ENCODE measurements at regions of chr12 and their contacts with region 1.

Region 1: DNA sequence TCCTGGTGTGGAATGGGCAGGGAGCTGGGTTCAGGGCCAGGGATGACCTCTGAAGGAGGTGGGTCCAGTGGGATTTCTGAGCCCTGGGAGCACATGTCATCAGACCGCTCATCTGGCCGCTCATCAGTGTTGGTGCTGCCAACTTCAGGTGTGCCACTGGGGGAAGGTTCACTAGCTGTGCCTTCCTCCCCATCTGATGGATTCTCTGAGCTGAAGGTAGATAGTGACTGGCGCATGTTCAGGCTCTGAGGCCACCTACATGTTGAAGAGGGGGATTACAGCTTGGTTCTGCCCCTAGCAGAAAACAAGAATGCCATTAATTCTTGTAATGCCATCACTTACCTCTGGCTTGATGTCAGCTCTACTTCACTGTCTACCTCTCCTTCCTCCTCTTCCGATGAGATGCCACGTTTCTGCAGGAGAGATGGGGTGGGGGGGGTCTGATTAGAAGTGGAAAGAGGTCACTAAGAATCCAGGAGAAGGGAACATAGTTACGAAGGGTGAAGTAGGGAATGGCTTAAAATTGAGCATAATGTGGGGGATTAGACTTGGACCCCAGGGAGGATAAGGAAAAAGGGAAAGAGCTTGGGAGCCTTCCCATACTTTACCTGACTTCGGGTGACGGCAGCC is 17.2 kb downstream of the MAP3K12 start:
- DNase-seq: no peak
- H3K4me3 ChIP-seq: no peak overlapping the region
- H3K27ac ChIP-seq: no peak overlapping the region
- H3K4me1 ChIP-seq: peaks cover 0 to 5% (median 1%) of the 10 kb centered on the region in 4 experiments; a peak in 4 of 7 replicates
- H3K27me3 ChIP-seq: no peaks in the 10 kb centered on the region
- CTCF ChIP-seq: peak; percentile 26 to 73 (median 46)
- EP300 ChIP-seq: no peak
- POLR2A ChIP-seq: peak; percentile 14 to 22; a peak in 2 of 3 replicates
- RAD21 ChIP-seq: peak; percentile 39 to 40; a peak in 3 of 4 replicates

Region 2: DNA sequence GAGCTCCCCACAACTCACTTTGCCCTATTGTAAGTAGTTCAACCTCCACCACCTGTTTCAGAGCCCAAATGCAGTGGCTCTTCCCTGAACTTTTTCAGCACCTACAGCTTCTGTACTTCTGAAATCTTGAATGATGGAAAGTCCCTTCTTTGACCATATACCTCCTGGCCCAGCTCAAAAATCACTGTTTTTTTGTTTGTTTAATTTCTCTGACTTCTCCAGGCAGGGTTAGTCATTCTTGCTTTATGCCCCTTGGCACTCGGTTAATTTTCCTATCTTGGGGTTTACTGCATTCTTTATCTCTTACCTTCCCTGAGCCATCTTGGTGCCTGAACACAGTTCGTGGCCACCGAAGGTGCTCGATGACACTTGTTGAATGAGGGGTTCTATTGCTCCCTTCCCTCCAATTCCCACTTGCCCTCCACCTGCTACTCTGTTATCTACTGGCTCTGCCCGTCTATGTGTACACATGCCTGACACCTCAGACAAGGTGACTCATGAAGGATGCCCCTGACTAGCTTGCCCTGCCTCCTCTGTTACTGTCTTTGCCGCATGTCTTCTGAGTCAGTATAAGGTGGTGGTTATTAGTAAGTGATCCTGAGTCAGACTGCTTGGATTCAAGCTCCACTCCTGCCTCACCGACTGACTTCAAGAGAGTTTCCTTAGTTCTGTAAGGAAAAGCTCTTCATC is 54.0 kb before region 1 on chr12:
- CTCF ChIA-PET with region 1: interaction called, 8 read pairs
- POLR2A ChIA-PET with region 1: interaction called, 15 read pairs
- DNase-seq: no peak
- H3K4me3 ChIP-seq: no peak overlapping the region
- H3K27ac ChIP-seq: no peak overlapping the region
- H3K4me1 ChIP-seq: no peaks in the 10 kb centered on the region
- H3K27me3 ChIP-seq: no peaks in the 10 kb centered on the region
- CTCF ChIP-seq: no peak
- EP300 ChIP-seq: no peak
- POLR2A ChIP-seq: no peak
- RAD21 ChIP-seq: no peak

Region 3: DNA sequence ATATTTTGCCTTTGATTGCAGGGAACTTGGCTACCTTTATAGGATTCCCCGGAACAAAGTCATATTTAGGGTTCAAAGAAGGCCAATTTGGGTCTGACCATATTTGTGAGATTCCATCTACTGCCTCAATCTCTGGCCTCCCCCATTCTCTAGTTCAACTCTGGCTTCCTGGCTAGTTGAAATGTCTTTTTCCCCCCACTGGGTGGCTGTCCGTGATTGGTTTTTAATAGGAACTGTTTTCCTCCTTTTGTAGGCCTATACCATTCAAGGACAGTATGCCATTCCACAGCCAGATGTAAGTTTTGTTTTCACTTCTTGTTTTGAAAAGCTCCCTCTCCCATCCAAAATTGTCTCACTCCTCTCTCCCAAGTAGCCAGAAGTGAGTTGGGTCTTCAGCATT is 16.4 kb before region 1 on chr12:
- CTCF ChIA-PET with region 1: interaction called, 57 read pairs
- POLR2A ChIA-PET with region 1: interaction called, 3,397 read pairs
- DNase-seq: no peak
- H3K4me3 ChIP-seq: no peak overlapping the region
- H3K27ac ChIP-seq: no peak overlapping the region
- H3K4me1 ChIP-seq: peaks cover 0 to 10% (median 0%) of the 10 kb centered on the region in 4 experiments; a peak in 2 of 7 replicates
- H3K27me3 ChIP-seq: no peaks in the 10 kb centered on the region
- CTCF ChIP-seq: no peak
- EP300 ChIP-seq: no peak
- POLR2A ChIP-seq: no peak; a peak in 1 of 3 replicates
- RAD21 ChIP-seq: no peak

Region 4: DNA sequence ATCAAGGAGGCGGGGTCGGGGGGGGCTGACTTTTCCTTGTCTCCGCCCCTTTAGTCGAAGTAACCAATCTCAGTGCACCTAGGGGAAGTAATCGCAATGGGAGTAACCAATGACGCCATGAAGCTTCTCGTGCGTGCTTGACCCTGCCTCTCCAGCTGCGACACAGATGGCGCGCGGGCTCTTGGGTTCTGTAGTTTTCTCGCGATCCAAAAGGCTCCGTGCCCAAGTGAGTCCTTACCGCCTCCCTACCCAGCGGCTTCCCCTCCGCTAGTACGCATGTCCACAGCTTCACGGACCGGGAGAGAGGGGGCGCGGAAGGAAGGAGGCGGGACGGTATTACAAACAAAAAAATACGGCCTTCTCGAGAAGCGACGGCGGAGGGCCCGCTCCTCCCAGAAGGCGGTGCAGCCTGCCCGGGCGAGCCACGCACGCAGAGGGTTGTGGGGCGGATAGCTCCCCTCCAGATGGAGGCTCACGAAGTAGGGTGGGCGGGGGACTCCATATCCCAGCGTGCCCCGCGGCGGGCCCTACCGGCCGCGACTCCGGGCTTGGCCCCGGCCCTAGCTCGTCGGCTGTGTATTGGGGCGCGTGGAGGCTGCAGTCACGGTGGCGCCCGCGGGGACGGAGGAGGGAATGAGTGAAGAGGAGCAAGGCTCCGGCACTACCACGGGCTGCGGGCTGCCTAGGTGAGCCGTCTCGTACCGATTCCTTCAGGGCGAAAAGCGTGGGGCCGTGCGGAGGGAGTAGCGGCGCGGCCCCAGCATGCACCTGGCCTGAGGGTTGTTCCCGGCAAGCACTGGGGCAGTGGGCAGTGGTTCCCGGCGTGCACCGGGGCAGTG is 18.9 kb after region 1 on chr12 and contains the start of gene TARBP2:
- CTCF ChIA-PET with region 1: interaction called, 41 read pairs
- POLR2A ChIA-PET with region 1: interaction called, 3,397 read pairs
- DNase-seq: peak; percentile 95 to 97
- H3K4me3 ChIP-seq: peak within 1 kb of the TSS; percentile 55 to 91 (median 77)
- H3K27ac ChIP-seq: peak within 1 kb of the TSS; percentile 91
- H3K4me1 ChIP-seq: peaks cover 9 to 41% (median 20%) of the 10 kb centered on the region in 4 experiments
- H3K27me3 ChIP-seq: no peaks in the 10 kb centered on the region
- CTCF ChIP-seq: no peak
- EP300 ChIP-seq: 0 out of 3 replicates have a peak, but pooled peaks of 1 of the 2 experiments have one; percentile 12
- POLR2A ChIP-seq: peak; percentile 66 to 86
- RAD21 ChIP-seq: no peak
- total RNA-seq, gene TARBP2: 66.1 and 69.9 TPM in 2 replicates